Activated CD4-positive, alpha-beta T cell treated with anti-CD3 and anti-CD28 coated beads, Interleukin-2, amount 10 ng/mL, durations not matched to agents 7 days and 5 days (primary cell): ENCODE measurements at regions of chr16 and their contacts with region 1.

Region 1: DNA sequence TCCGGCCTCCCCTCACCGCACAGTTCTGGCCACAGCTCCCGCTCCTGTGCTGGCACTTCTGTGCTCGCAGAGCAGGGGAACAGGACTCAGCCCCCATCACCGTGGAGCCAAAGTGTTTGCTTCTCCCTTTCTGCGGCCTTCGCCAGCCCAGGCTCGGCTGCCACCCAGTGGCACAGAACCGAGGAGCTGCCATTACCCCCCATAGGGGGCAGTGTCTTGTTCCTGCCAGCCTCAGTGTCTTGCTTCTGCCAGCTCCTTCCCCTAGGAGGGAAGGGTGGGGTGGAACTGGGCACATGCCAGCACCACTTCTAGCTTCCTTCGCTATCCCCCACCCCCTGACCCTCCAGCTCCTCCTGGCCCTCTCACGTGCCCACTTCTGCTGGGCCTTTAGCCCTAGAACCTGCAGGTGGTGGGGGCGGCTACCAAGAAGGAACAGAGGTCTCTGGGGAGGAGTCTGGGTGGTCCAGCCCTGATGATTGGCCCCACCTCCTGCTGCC is 645 bp upstream of the ELMO3 start:
- DNase-seq: peak; percentile 34
- H3K4me3 Mint-ChIP-seq: no peak overlapping the region
- H3K27ac Mint-ChIP-seq: no peak overlapping the region
- H3K4me1 Mint-ChIP-seq: peaks cover 32% of the 10 kb centered on the region
- H3K27me3 Mint-ChIP-seq: no peaks in the 10 kb centered on the region

Region 2: GRCh38 chr16:67116388-67117311 is 81.6 kb before region 1 on chr16:
- CTCF ChIA-PET with region 1: no interaction called
- POLR2A ChIA-PET with region 1: no interaction called
- DNase-seq: no peak
- H3K4me3 Mint-ChIP-seq: no peak overlapping the region
- H3K27ac Mint-ChIP-seq: no peak overlapping the region
- H3K4me1 Mint-ChIP-seq: peaks cover 14% of the 10 kb centered on the region
- H3K27me3 Mint-ChIP-seq: no peaks in the 10 kb centered on the region

Region 3: GRCh38 chr16:67216612-67217490 is 18.6 kb after region 1 on chr16:
- CTCF ChIA-PET with region 1: interaction called, 10 read pairs
- POLR2A ChIA-PET with region 1: no interaction called
- DNase-seq: no peak
- H3K4me3 Mint-ChIP-seq: no peak overlapping the region
- H3K27ac Mint-ChIP-seq: peak overlapping the region; percentile 43
- H3K4me1 Mint-ChIP-seq: peaks cover 12% of the 10 kb centered on the region
- H3K27me3 Mint-ChIP-seq: no peaks in the 10 kb centered on the region